ENCODE measurements at regions of chr20 and their contacts with region 1.

Region 1: DNA sequence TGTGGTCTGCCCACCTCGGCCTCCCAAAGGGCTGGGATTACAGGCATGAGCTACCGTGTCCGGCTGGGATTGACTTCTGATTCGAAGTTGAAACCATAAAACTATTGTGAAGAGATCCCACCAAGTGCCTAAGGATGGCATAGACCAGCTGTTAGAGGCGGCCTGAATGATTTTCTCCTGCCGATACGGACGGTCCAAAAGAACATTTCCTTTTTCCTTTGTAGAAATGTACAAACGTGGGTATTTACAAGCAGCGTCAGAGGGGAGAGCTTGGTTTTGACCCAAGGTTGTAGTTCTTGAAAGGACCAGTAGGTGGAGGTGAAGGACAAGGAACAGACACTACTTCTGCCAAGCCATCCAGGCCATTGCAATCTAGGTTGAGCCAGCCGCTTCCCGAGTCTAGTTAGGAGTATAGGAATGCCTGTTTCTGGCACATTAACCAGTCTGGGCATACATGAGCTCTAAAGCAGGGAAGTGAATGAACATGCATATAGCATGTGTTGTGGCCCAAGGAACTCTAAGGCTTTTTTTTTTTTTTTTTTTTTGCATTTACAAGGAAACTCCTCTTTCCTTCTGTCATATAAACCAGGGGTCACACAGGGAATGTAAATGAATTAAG is 29.1 kb downstream of the MOCS3 start:
- DNase-seq: peak; percentile 76 to 92
- ATAC-seq: peak; percentile 96
- H3K4me3 ChIP-seq: no peak overlapping the region
- H3K27ac ChIP-seq: peak overlapping the region; percentile 38 to 75; a peak in 3 of 6 replicates
- H3K4me1 ChIP-seq: peaks cover 4% of the 10 kb centered on the region; the same call in 2 of the 3 replicates
- CTCF ChIP-seq: peak; percentile 92
- EP300 ChIP-seq: no peak
- POLR2A ChIP-seq: no peak
- RAD21 ChIP-seq: peak; percentile 96 to 98

Region 2: DNA sequence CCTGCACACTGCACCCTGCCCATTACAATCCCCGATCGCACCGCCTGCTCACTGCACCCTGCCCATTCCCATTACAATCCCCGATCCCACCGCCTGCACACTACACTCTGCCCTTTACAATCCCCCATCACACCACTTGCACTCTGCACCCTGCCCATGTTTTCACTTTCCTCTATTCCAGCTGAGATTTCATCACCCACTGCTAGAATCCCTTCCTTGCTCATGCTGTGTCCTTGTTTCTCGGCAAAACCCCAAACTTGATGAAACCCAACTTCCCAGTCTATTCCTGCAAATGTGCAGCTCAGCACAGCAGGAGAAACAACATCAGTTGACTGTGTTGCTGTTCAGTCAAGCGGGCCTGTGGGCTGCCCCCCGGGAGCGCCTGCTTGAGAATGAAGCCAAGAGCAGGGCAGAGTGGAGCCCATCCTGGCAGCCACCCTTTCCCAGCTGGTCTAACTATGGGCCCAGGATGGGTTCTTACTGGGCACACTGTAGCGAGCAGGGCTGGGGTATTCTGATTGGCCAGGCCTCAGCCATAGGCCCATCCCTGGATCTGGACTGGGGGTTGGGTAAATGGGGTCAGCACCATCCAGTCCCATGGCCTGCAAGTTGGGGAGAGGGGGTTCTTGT is 11.9 kb before region 1 on chr20:
- CTCF ChIA-PET with region 1: interaction called, 44 read pairs
- POLR2A ChIA-PET with region 1: no interaction called
- DNase-seq: no peak
- ATAC-seq: no peak
- H3K4me3 ChIP-seq: no peak overlapping the region
- H3K27ac ChIP-seq: no peak overlapping the region
- H3K4me1 ChIP-seq: peaks cover 18% of the 10 kb centered on the region
- CTCF ChIP-seq: no peak
- EP300 ChIP-seq: no peak
- POLR2A ChIP-seq: no peak
- RAD21 ChIP-seq: no peak

Region 3: DNA sequence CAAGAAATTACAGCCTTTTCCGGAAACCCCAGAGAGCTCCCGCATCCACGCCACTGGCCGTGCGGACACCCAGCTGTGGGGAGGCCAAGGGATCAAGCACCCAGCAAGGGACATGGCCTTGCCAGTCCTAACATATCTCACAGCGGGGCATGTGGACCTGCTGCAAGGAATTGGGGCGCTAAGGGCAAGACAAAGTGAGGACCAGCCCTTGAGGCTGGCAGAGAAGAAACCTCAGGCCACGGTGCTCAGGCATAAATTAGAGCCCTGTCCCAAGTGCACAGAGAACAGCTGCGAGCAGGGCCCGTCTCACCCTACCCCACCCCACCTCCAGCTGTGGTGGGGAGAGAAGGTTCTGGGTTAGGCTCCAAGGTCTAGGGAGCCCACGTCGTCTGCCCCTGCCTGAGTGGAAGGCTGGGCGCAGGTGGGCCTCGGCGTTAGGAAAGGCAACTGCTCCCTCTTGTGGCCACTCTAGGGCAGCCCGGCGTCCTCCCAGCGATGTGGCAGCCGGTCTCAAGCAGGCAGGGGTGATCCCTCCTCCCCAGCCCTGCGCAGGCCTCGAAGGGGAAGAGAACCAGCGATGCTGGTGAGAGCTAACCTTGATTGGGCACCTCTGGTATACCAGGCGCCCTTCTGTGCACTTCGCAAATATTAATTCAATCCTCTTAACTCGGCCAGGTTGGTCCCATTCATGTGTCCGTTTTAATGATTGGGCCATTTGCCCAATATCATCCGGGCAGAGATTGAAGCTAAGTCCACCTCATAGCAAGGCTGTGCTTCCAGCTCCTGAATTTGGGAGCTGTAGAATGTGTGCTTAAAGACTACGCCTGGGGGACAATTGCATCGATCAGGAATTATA is 319.0 kb after region 1 on chr20:
- CTCF ChIA-PET with region 1: interaction called, 565 read pairs
- POLR2A ChIA-PET with region 1: interaction called, 5 read pairs
- DNase-seq: peak; percentile 66 to 78
- ATAC-seq: peak; percentile 98 to 100
- H3K4me3 ChIP-seq: no peak overlapping the region
- H3K27ac ChIP-seq: peak overlapping the region; percentile 26 to 41; a peak in 4 of 6 replicates
- H3K4me1 ChIP-seq: 0 out of 3 replicates have a peak, but pooled peaks cover 3% of the 10 kb centered on the region
- CTCF ChIP-seq: peak; percentile 94
- EP300 ChIP-seq: no peak
- POLR2A ChIP-seq: no peak
- RAD21 ChIP-seq: peak; percentile 95 to 97

Region 4: GRCh38 chr20:51326201-51326819 is 338.6 kb after region 1 on chr20:
- CTCF ChIA-PET with region 1: interaction called, 60 read pairs
- POLR2A ChIA-PET with region 1: no interaction called
- DNase-seq: peak; percentile 66 to 73
- ATAC-seq: peak; percentile 55 to 85; a peak in 3 of 6 replicates
- H3K4me3 ChIP-seq: no peak overlapping the region
- H3K27ac ChIP-seq: no peak overlapping the region
- H3K4me1 ChIP-seq: no peaks in the 10 kb centered on the region
- CTCF ChIP-seq: peak; percentile 54
- EP300 ChIP-seq: no peak
- POLR2A ChIP-seq: no peak
- RAD21 ChIP-seq: peak; percentile 38 to 42; a peak in 3 of 5 replicates

Region 5: GRCh38 chr20:51366155-51366886 is 378.6 kb after region 1 on chr20:
- CTCF ChIA-PET with region 1: interaction called, 21 read pairs
- POLR2A ChIA-PET with region 1: no interaction called
- DNase-seq: peak; percentile 86 to 90
- ATAC-seq: peak; percentile 87 to 90
- H3K4me3 ChIP-seq: peak overlapping the region; percentile 15; the same call in 1 of the 3 replicates
- H3K27ac ChIP-seq: peak overlapping the region; percentile 92 to 96
- H3K4me1 ChIP-seq: peaks cover 35% of the 10 kb centered on the region
- CTCF ChIP-seq: no peak
- EP300 ChIP-seq: peak; percentile 60 to 77; a peak in 3 of 5 replicates
- POLR2A ChIP-seq: no peak
- RAD21 ChIP-seq: peak in 1 of 2 experiments; percentile 27; a peak in 2 of 5 replicates

Region 6: GRCh38 chr20:51456511-51457509 is 469.1 kb after region 1 on chr20:
- CTCF ChIA-PET with region 1: interaction called, 12 read pairs
- POLR2A ChIA-PET with region 1: interaction called, 3 read pairs
- DNase-seq: peak; percentile 86 to 96
- ATAC-seq: peak; percentile 93 to 94
- H3K4me3 ChIP-seq: peak overlapping the region; percentile 24; the same call in 1 of the 3 replicates
- H3K27ac ChIP-seq: peak overlapping the region; percentile 90 to 92
- H3K4me1 ChIP-seq: peaks cover 20% of the 10 kb centered on the region
- CTCF ChIP-seq: no peak
- EP300 ChIP-seq: no peak
- POLR2A ChIP-seq: peak; percentile 39
- RAD21 ChIP-seq: peak in 1 of 2 experiments; percentile 25; a peak in 2 of 5 replicates

Region 7: GRCh38 chr20:51631011-51631950 is 643.6 kb after region 1 on chr20:
- CTCF ChIA-PET with region 1: interaction called, 45 read pairs
- POLR2A ChIA-PET with region 1: interaction called, 10 read pairs
- DNase-seq: peak; percentile 93 to 94
- ATAC-seq: peak; percentile 83 to 90
- H3K4me3 ChIP-seq: no peak overlapping the region
- H3K27ac ChIP-seq: peak overlapping the region; percentile 71 to 89
- H3K4me1 ChIP-seq: peaks cover 26% of the 10 kb centered on the region
- CTCF ChIP-seq: no peak
- EP300 ChIP-seq: peak; percentile 32 to 73; a peak in 3 of 5 replicates
- POLR2A ChIP-seq: no peak
- RAD21 ChIP-seq: no peak